ENCODE measurements at regions of chr3 and their contacts with region 1.

Region 1: DNA sequence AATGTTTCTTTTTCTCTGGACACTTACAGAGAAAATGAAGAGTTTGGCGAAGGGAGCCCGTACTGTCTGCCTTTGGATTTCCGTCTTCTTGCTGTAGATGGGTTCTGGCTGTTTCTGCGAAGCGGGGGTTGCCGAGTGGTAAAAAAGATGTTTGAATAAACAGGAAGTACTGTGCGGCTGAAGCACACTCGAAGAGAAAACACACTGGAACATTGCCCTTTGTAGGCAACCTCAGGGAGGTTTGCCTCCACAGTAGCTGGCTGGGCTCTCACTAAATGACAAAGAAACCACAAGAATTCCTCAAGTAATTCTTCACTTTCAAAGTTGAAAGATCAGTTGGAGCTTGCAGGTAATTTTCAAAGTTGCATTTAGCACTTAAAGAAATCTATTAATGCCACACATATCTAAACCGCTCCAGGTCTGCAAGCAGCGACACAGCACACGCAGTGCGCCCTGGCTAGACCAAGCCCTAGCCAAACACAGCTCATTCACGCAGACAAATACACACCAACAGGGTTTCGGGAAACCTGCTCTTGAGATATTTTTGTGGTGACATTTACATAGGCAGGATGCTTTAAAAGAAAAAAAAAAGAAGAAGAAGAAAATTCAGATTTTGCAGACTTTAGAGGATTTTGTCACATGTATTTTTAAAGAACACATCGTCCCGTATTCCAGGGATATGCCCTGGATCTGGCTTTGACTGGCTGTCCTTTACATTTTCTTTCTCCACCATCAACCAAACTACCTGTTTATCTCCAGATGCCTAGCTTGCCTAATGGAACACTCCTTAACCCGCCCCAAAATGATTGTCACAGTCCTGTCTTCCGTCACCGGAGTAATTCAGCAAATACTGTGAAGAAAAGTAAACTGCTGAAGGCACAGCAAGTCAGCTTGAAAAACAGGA is 452.8 kb downstream of the FOXP1 start:
- DNase-seq: no peak
- H3K4me3 ChIP-seq: peak overlapping the region; percentile 43 to 55
- H3K27ac ChIP-seq: peak overlapping the region; percentile 91
- H3K4me1 ChIP-seq: peaks cover 55% of the 10 kb centered on the region
- H3K27me3 ChIP-seq: no peaks in the 10 kb centered on the region
- CTCF ChIP-seq: peak in 1 of 3 experiments; percentile 19
- POLR2A ChIP-seq: peak in 1 of 2 donors; percentile 41

Region 2: GRCh38 chr3:71247221-71247976 is 116.7 kb after region 1 on chr3:
- intact Hi-C with region 1: loop called (anchors 10 kb)
- DNase-seq: no peak
- H3K4me3 ChIP-seq: no peak overlapping the region
- H3K27ac ChIP-seq: no peak overlapping the region
- H3K4me1 ChIP-seq: peaks cover 21% of the 10 kb centered on the region
- H3K27me3 ChIP-seq: no peaks in the 10 kb centered on the region
- CTCF ChIP-seq: no peak
- POLR2A ChIP-seq: no peak

Region 3: GRCh38 chr3:71310359-71310979 is 179.7 kb after region 1 on chr3:
- intact Hi-C with region 1: no loop called
- DNase-seq: no peak
- H3K4me3 ChIP-seq: no peak overlapping the region
- H3K27ac ChIP-seq: no peak overlapping the region
- H3K4me1 ChIP-seq: peaks cover 26% of the 10 kb centered on the region
- H3K27me3 ChIP-seq: no peaks in the 10 kb centered on the region
- CTCF ChIP-seq: no peak
- POLR2A ChIP-seq: no peak